ENCODE measurements at regions of chr11 and their contacts with region 1.

Region 1: GRCh38 chr11:8671193-8671612 is 11.3 kb downstream of the TRIM66 start:
- DNase-seq: peak; percentile 91
- H3K4me3 ChIP-seq: no peak overlapping the region
- H3K27ac ChIP-seq: peak overlapping the region; percentile 88
- H3K4me1 ChIP-seq: peaks cover 24% of the 10 kb centered on the region
- H3K27me3 ChIP-seq: no peaks in the 10 kb centered on the region
- CTCF ChIP-seq: no peak

Region 2: GRCh38 chr11:8328848-8329330 is 342.3 kb before region 1 on chr11:
- CTCF ChIA-PET with region 1: no interaction called
- dilution Hi-C with region 1: no loop called
- in situ Hi-C with region 1: no loop called
- intact Hi-C with region 1: no loop called
- DNase-seq: peak; percentile 88
- H3K4me3 ChIP-seq: no peak overlapping the region
- H3K27ac ChIP-seq: no peak overlapping the region
- H3K4me1 ChIP-seq: peaks cover 7% of the 10 kb centered on the region
- H3K27me3 ChIP-seq: no peaks in the 10 kb centered on the region
- CTCF ChIP-seq: peak; percentile 83 to 94

Region 3: GRCh38 chr11:8610532-8611116 is 60.6 kb before region 1 on chr11:
- CTCF ChIA-PET with region 1: no interaction called
- dilution Hi-C with region 1: no loop called
- in situ Hi-C with region 1: no loop called
- intact Hi-C with region 1: no loop called
- DNase-seq: no peak
- H3K4me3 ChIP-seq: no peak overlapping the region
- H3K27ac ChIP-seq: no peak overlapping the region
- H3K4me1 ChIP-seq: peaks cover 8% of the 10 kb centered on the region
- H3K27me3 ChIP-seq: no peaks in the 10 kb centered on the region
- CTCF ChIP-seq: no peak

Region 4: DNA sequence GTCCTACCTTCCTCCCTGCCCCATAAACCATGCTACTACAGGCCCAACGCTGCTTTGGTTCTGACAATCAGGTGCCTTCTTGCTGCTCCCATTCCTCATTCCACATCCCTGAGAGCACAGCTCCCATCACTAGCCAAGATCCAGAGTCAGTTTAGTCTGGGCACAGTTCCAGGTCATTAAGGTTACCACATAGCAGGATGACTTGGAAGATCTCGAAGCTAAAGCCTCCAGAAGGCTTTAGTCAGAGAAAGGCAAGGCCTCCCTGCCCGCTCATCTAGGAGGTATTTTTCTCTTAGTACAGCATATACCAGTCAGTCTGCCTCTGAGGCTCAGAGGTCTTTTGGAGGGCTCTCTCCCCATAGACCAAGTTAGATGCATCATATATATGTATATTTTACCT is 19.1 kb before region 1 on chr11:
- CTCF ChIA-PET with region 1: no interaction called
- dilution Hi-C with region 1: no loop called
- in situ Hi-C with region 1: no loop called
- intact Hi-C with region 1: loop called (anchors 2 kb)
- DNase-seq: peak; percentile 86
- H3K4me3 ChIP-seq: no peak overlapping the region
- H3K27ac ChIP-seq: no peak overlapping the region
- H3K4me1 ChIP-seq: peaks cover 13% of the 10 kb centered on the region
- H3K27me3 ChIP-seq: no peaks in the 10 kb centered on the region
- CTCF ChIP-seq: no peak

Measured in mammary epithelial cell (primary cell).